Naive thymus-derived CD4-positive, alpha-beta T cell (primary cell): ENCODE measurements at regions of chr3 and their contacts with region 1.

Region 1: DNA sequence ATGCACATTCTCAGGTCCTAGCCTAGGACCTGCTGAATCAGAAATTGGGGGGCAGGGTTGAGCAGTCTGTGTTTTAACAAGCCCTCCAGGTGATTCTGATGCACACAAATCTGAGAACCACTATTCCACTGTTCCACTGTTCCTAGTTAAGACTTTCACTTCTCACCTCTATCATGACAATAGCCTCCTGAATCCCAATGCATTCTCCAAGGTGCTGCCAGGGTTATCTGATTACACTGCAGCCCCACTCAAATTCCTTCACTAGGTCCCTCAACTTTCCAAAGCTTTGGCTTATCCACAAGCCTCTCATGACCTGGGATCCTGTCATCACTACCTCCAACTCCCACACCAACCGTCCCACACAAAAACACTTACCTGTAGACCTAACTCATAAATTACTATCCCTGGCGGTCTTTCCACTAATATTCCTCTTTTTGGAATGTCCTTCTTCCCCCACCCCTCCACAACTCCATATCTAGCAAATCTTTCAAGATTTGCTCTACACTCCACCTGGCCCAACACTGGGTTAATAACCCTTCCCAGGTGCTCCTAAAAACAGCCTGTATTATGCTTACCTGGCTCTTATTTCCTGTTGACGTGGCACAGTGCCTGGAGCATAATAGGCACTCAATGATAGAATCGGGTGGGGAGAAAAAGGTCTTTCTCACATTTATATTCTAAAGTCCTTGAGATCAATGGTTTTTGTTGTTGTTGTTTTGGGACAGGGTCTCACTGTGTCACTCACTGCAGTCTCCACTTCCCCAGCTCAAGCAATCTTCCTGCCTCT is 27.2 kb downstream of the TBL1XR1 start:
- DNase-seq: no peak
- ATAC-seq: no peak
- H3K4me3 ChIP-seq: no peak overlapping the region
- H3K4me3 Mint-ChIP-seq: peak overlapping the region in 9 of 10 donors; percentile 21 to 73 (median 61)
- H3K27ac ChIP-seq: no peak overlapping the region
- H3K27ac Mint-ChIP-seq: peak overlapping the region; percentile 2 to 82 (median 44)
- H3K4me1 ChIP-seq: peaks cover 22 to 28% of the 10 kb centered on the region in 2 donors
- H3K4me1 Mint-ChIP-seq: peaks cover 48 to 88% (median 71%) of the 10 kb centered on the region in 7 donors
- H3K27me3 ChIP-seq: no peaks in the 10 kb centered on the region
- H3K27me3 Mint-ChIP-seq: no peaks in the 10 kb centered on the region

Region 2: GRCh38 chr3:177005718-177006405 is 164.3 kb before region 1 on chr3:
- CTCF ChIA-PET with region 1: no interaction called
- POLR2A ChIA-PET with region 1: no interaction called
- intact Hi-C with region 1: no loop called
- DNase-seq: no peak
- ATAC-seq: no peak
- H3K4me3 ChIP-seq: no peak overlapping the region
- H3K4me3 Mint-ChIP-seq: no peak overlapping the region
- H3K27ac ChIP-seq: no peak overlapping the region
- H3K27ac Mint-ChIP-seq: no peak overlapping the region
- H3K4me1 ChIP-seq: no peaks in the 10 kb centered on the region
- H3K4me1 Mint-ChIP-seq: no peaks in the 10 kb centered on the region
- H3K27me3 ChIP-seq: no peaks in the 10 kb centered on the region
- H3K27me3 Mint-ChIP-seq: no peaks in the 10 kb centered on the region

Region 3: DNA sequence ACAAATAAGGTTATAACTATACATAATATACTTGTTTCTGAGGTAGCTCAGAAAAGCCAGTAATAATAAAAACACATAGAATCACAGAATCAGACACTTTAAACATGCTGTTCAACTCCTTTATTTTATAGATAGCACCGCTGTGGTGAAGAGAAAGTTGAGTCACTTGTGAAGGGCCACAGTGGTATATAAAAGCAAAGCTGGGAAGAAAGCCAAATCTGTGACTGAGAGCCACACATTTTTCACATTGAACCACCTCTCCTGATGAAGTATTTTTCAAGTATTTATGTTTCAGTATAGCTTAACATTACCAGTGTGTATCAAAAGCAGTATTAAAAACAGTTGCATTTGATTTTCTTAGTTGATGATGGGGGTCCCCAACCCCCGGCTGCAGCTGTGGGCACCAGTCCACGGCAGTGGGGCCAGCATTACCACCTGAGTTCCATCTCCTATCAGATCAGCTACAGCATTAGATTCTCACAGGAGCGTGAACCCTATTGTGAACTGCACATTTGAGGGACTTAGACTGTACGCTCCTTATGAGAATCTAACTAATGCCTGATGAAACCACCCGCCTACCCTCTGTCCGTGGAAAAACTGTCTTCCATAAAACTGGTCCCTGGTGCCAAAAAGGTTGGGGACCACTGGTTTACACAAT is 19.0 kb before region 1 on chr3:
- CTCF ChIA-PET with region 1: no interaction called
- POLR2A ChIA-PET with region 1: no interaction called
- intact Hi-C with region 1: loop called in 1 of 2 experiments (anchors 2 kb)
- DNase-seq: peak in 5 of 9 donors; percentile 15 to 41 (median 31)
- ATAC-seq: peak; percentile 81
- H3K4me3 ChIP-seq: no peak overlapping the region
- H3K4me3 Mint-ChIP-seq: peak overlapping the region; percentile 8 to 69 (median 48)
- H3K27ac ChIP-seq: no peak overlapping the region
- H3K27ac Mint-ChIP-seq: peak overlapping the region in 8 of 9 donors; percentile 26 to 87 (median 73)
- H3K4me1 ChIP-seq: peaks cover 14 to 18% of the 10 kb centered on the region in 2 donors
- H3K4me1 Mint-ChIP-seq: peaks cover 40 to 84% (median 69%) of the 10 kb centered on the region in 7 donors
- H3K27me3 ChIP-seq: no peaks in the 10 kb centered on the region
- H3K27me3 Mint-ChIP-seq: no peaks in the 10 kb centered on the region

Region 4: GRCh38 chr3:177203689-177204439 is 33.7 kb after region 1 on chr3:
- CTCF ChIA-PET with region 1: no interaction called
- POLR2A ChIA-PET with region 1: no interaction called
- intact Hi-C with region 1: no loop called
- DNase-seq: no peak
- ATAC-seq: no peak
- H3K4me3 ChIP-seq: no peak overlapping the region
- H3K4me3 Mint-ChIP-seq: no peak overlapping the region
- H3K27ac ChIP-seq: no peak overlapping the region
- H3K27ac Mint-ChIP-seq: no peak overlapping the region
- H3K4me1 ChIP-seq: peaks cover 19 to 25% of the 10 kb centered on the region in 2 donors
- H3K4me1 Mint-ChIP-seq: peaks cover 14 to 55% (median 34%) of the 10 kb centered on the region in 7 donors
- H3K27me3 ChIP-seq: no peaks in the 10 kb centered on the region
- H3K27me3 Mint-ChIP-seq: no peaks in the 10 kb centered on the region